Activated CD4-positive, alpha-beta T cell treated with anti-CD3 and anti-CD28 coated beads, Interleukin-2, amount 10 ng/mL, durations not matched to agents 24 days and 14 days (primary cell): ENCODE measurements at regions of chr7 and their contacts with region 1.

Region 1: DNA sequence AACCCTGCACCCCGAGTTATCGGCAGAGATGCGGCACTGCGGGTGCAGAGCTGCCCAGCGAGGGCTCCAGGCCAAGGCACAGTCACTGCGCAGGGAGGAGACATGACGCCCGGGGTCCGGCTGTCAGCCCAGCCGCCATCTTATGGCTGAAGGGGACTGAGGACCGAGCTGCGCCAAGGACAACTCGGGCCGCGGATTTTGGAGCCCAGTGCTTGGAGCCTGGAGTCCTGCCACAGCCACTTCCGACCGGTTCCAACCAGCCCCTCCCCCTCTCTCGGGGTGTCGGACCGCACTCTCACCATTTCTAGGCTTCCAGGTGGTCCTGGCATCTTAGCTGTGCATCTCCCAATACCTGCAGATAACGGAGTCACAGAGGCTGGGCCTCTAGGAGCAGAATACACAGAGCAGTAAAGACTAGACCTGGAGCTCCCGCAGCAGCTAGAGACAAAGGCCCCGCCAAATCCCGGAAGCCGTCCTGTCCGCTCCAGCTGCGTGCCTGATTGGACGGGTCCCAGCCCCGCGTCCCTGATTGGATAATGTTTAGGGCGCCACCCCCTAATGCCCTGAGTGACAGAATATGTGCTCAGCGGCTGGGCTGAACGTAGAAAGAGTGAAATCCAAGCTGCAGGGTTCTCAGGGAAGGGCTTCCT is at the start of gene ZNF680:
- DNase-seq: peak; percentile 96
- H3K4me3 Mint-ChIP-seq: peak within 1 kb of the TSS; percentile 100
- H3K27ac Mint-ChIP-seq: peak within 1 kb of the TSS; percentile 98
- H3K4me1 Mint-ChIP-seq: peaks cover 2% of the 10 kb centered on the region
- H3K27me3 Mint-ChIP-seq: no peaks in the 10 kb centered on the region
- total RNA-seq, gene ZNF680: 10.4 and 10.7 TPM in 2 replicates

Region 2: GRCh38 chr7:63925623-63926460 is 636.9 kb before region 1 on chr7:
- intact Hi-C with region 1: loop called (anchors 1 kb)
- DNase-seq: peak; percentile 94
- H3K4me3 Mint-ChIP-seq: peak overlapping the region; percentile 87
- H3K27ac Mint-ChIP-seq: peak overlapping the region; percentile 87
- H3K4me1 Mint-ChIP-seq: peaks cover 1% of the 10 kb centered on the region
- H3K27me3 Mint-ChIP-seq: no peaks in the 10 kb centered on the region

Region 3: DNA sequence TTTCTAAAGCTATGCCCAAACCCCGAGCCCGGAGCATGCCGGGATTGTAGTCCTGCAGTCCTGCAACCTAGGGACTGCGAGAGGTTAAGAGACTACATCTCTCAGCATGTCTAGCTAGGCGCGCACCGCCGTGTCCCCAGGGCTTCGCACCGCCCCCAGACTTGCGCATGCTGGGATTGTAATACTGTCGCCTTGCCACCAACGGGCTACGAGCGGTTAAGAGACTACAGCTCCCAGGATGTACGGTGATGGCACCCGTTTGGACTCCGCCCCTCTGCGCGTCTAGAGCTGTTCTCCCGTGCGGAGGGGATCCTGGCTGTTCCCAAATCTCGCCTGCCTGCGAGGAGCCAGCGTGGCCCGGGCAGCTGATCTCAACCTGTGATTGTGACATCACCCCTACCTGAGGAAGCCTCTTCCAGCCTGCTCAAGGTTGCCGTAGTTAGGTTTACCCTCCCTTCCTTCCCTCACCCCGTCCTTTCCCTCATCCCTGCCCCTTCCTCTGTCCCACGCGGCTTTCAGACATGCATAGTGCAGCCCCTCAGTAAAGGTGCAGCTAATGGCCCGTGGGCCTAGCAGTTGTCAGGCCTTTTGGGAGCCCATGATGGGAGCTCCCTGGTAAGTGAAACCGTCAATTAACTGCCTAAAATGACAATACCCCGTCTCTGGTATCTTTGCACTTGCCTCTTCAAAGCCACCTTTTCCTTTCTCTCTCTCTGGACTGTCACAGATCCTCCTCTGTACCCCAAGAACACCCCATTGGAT is 255.3 kb before region 1 on chr7:
- intact Hi-C with region 1: loop called (anchors 1 kb)
- DNase-seq: peak; percentile 97
- H3K4me3 Mint-ChIP-seq: peak overlapping the region; percentile 97
- H3K27ac Mint-ChIP-seq: peak overlapping the region; percentile 93
- H3K4me1 Mint-ChIP-seq: peaks cover 14% of the 10 kb centered on the region
- H3K27me3 Mint-ChIP-seq: no peaks in the 10 kb centered on the region

Region 4: DNA sequence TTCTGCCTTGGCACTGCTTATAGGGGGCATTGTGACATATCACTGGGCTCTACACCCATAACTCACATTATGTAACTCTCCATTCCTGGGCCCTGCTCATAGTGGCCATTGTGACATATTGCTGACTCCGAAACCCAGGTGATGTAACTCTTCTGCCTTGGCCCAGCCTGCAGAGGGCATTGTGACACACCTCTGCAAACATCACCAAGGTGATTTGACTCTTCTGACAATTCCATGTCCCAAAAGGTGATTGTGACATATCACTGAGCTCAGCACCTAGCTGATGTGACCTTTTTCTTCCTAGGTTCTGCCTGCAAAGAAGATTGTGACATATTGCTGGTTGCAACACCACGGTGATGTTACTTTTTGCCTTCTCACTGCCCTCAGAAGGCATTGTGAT is 36.6 kb after region 1 on chr7:
- intact Hi-C with region 1: no loop called
- DNase-seq: no peak
- H3K4me3 Mint-ChIP-seq: no peak overlapping the region
- H3K27ac Mint-ChIP-seq: no peak overlapping the region
- H3K4me1 Mint-ChIP-seq: no peaks in the 10 kb centered on the region
- H3K27me3 Mint-ChIP-seq: no peaks in the 10 kb centered on the region

Region 5: DNA sequence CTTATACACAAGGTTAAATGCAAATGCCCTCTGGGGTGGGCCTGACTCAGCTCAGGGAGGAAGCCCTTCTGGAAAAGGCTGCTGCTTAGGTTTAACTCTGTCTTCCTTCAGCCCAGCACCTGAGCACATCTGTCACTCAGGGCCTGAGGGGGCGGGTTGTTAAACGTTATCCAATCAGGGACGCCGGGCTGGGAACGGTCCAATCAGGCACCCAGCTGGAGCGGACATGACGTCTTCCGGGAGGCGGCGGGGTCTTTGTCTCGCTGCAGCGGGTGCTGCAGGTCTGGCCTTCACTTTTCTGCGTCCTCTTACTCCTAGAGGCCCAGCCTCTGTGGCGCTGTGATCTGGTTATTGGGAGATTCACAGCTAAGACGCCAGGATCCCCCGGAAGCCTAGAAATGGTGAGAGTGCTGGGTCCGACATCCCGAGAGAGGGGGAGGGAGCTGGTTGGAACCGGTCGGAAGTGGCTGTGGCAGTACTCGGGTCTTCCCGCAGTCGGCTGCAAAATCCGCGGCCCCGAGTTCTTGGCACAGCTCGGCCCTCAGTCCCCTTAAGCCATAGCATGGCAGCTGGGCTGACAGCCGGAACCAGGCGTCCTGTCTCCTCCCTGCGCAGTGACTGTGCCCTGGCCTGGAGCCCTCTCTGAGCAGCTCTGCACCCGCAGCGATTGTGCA is 231.6 kb after region 1 on chr7 and contains the start of gene ZNF138:
- intact Hi-C with region 1: loop called (anchors 5 kb)
- DNase-seq: peak; percentile 97
- H3K4me3 Mint-ChIP-seq: peak within 1 kb of the TSS; percentile 100
- H3K27ac Mint-ChIP-seq: peak within 1 kb of the TSS; percentile 97
- H3K4me1 Mint-ChIP-seq: peaks cover 13% of the 10 kb centered on the region
- H3K27me3 Mint-ChIP-seq: no peaks in the 10 kb centered on the region
- total RNA-seq, gene ZNF138: 8.6 and 9.2 TPM in 2 replicates

Region 6: DNA sequence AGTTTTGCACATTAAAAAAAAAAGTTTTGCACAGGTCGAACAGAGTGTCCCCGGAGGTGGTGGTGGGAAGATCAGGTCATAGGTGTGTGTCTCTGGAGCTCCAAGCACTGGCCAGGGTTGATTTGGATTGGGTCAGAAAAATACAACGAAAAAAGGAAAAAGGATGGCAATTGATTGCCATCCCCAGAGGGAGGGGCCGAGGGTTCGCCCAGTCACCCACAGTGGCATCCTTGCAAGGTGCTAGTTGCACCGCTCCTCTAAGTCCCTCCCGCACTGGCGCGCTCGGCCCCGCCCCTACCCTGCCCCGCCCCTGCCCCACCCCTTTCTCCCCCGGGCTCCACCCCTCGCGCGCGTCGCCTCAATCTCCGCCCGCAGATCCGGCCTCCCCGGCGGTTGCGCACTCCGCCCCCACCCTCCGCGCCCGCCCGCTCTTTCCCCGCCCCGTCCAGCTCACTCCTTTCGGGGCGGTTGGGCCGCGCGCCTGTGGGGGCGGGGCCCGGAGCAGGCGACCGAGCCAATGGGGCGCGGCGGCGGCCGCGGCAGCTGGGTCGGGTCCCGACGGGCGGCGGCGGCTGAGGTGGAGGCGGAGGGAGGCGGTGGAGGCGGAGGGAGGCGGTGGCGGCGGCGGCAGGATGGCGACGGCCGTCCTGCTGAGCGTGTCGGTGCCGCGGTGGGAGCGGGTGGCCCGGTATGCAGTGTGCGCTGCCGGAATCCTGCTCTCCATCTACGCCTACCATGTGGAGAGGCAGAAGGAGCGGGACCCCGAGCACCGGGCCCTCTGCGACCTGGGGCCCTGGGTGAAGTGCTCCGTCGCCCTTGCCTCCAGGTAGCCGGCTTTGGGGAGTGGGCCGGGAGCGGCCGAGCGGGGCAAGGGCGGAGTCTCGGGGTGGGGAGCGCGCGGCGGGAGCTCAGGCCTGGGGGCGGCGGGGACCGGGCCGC is 475.3 kb after region 1 on chr7:
- intact Hi-C with region 1: loop called (anchors 2 kb)
- DNase-seq: peak; percentile 96
- H3K4me3 Mint-ChIP-seq: peak overlapping the region; percentile 82
- H3K27ac Mint-ChIP-seq: peak overlapping the region; percentile 86
- H3K4me1 Mint-ChIP-seq: peaks cover 11% of the 10 kb centered on the region
- H3K27me3 Mint-ChIP-seq: no peaks in the 10 kb centered on the region